ENCODE measurements at regions of chrX and their contacts with region 1.

Region 1: DNA sequence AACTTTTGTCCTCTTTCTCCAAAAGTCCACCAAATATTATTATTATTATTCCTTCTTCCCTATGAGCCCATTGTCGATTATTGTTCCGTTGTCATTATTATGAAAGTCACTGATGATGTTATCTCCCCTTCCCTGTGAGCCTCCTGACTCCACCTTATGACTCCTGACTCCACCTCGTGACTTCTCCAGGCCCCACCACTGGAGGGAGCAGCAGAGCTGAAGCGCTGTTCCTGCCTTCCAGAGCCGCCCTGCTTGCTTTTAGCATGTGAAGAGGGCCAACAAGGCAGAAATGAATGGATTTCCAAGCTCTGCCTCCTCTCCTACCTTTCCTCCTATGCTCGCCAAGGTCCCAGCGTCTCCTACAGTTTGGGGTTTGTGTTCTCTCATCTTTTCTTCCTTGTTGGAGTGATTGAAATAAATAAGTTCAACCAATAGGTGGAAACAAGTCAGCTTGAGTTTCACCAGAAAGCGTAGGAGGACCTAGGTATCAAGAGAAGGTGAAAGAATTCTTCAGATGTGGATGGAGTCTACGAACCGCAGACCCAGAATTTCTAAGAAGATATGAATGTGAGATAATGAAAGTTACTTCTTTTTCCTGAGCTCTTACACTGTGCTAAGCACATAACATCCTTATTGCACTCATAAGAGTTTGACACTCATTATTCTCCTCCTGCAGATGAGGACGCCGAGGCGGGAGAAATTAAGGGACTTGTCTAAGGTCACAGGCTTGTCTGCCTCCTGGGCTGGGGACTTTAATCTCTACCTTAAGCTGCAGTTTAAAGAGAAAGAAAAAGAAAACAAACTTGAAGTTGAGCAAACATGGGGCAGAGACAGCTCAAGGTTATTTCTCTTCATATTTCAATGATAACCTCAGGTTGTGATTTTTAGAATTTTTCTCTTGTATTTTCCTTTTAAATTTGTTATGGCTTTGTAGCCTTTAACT is 26.1 kb downstream of the IGSF1 start:
- DNase-seq: peak; percentile 58 to 72 (median 66)
- ATAC-seq: peak; percentile 99
- H3K4me3 ChIP-seq: no peak overlapping the region
- H3K27ac ChIP-seq: no peak overlapping the region
- H3K4me1 ChIP-seq: no peaks in the 10 kb centered on the region
- H3K27me3 ChIP-seq: no peaks in the 10 kb centered on the region
- CTCF ChIP-seq: peak; percentile 68 to 83 (median 82)
- EP300 ChIP-seq: no peak
- POLR2A ChIP-seq: no peak
- RAD21 ChIP-seq: peak; percentile 69 to 74

Region 2: DNA sequence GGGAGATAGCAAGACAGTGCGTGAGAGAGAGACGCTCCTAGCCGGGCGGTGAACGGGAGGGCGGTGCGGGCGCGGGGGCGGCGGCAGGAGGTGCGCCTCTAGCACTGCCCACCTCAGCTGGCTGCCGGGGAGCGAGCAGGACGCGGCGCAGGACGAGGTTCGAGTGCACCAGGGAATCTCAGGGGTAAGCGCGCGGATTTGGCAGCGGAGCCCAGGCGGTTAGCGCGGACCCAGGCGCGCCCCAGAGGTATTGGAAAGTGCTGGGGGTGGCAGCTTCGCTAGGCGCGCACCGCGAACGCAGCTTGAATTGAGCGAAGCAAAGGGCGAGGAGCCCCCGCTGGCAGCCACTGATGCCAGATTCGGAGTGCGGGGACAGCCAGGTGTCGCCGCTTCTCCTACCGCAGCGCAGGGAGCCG is 180.7 kb before region 1 on chrX:
- CTCF ChIA-PET with region 1: no interaction called
- POLR2A ChIA-PET with region 1: no interaction called
- in situ Hi-C with region 1: no loop called
- intact Hi-C with region 1: no loop called
- DNase-seq: no peak
- ATAC-seq: no peak
- H3K4me3 ChIP-seq: no peak overlapping the region
- H3K27ac ChIP-seq: no peak overlapping the region
- H3K4me1 ChIP-seq: peaks cover 0 to 10% of the 10 kb centered on the region in 2 experiments; a peak in 2 of 5 replicates
- H3K27me3 ChIP-seq: peaks cover 0 to 27% of the 10 kb centered on the region in 2 experiments; a peak in 3 of 5 replicates
- CTCF ChIP-seq: no peak
- EP300 ChIP-seq: no peak
- POLR2A ChIP-seq: no peak
- RAD21 ChIP-seq: no peak

Region 3: GRCh38 chrX:131331152-131331551 is 68.1 kb after region 1 on chrX:
- CTCF ChIA-PET with region 1: no interaction called
- POLR2A ChIA-PET with region 1: no interaction called
- in situ Hi-C with region 1: no loop called
- intact Hi-C with region 1: loop called (anchors 5 kb)
- DNase-seq: peak in 2 of 4 experiments; percentile 6 to 45
- ATAC-seq: peak; percentile 72
- H3K4me3 ChIP-seq: no peak overlapping the region
- H3K27ac ChIP-seq: no peak overlapping the region
- H3K4me1 ChIP-seq: no peaks in the 10 kb centered on the region; a peak in 1 of 5 replicates
- H3K27me3 ChIP-seq: no peaks in the 10 kb centered on the region
- CTCF ChIP-seq: peak; percentile 25 to 56 (median 35); a peak in 4 of 6 replicates
- EP300 ChIP-seq: no peak
- POLR2A ChIP-seq: no peak
- RAD21 ChIP-seq: peak; percentile 16 to 44; a peak in 2 of 4 replicates

Region 4: DNA sequence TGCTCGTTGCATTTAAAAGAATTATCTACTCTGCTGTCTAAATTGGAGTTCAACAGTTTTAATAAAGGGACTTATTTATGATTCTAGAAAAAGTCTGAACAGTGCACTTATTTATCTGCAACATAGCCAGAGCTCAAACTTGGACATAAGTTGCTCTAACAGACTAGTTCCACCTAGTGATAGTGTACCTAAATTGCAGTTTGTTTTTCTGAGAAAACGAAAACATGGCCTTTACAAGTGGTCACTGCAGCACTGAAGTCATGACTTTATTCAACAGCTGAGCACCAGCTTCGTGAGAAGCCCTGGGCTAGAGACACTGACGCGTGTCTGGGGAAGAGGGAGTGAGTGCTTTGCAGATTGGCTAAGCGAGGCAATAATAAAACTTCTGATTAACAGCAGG is 103.4 kb after region 1 on chrX:
- CTCF ChIA-PET with region 1: no interaction called
- POLR2A ChIA-PET with region 1: interaction called, 3 read pairs
- in situ Hi-C with region 1: no loop called
- intact Hi-C with region 1: loop called (anchors 10 kb)
- DNase-seq: peak in 2 of 4 experiments; percentile 8 to 9
- ATAC-seq: 0 out of 3 replicates have a peak, but pooled peaks have one; percentile 61
- H3K4me3 ChIP-seq: no peak overlapping the region
- H3K27ac ChIP-seq: no peak overlapping the region
- H3K4me1 ChIP-seq: no peaks in the 10 kb centered on the region
- H3K27me3 ChIP-seq: no peaks in the 10 kb centered on the region
- CTCF ChIP-seq: peak in 1 of 3 experiments; percentile 46; a peak in 3 of 6 replicates
- EP300 ChIP-seq: no peak
- POLR2A ChIP-seq: no peak
- RAD21 ChIP-seq: peak; percentile 48 to 67

Region 5: DNA sequence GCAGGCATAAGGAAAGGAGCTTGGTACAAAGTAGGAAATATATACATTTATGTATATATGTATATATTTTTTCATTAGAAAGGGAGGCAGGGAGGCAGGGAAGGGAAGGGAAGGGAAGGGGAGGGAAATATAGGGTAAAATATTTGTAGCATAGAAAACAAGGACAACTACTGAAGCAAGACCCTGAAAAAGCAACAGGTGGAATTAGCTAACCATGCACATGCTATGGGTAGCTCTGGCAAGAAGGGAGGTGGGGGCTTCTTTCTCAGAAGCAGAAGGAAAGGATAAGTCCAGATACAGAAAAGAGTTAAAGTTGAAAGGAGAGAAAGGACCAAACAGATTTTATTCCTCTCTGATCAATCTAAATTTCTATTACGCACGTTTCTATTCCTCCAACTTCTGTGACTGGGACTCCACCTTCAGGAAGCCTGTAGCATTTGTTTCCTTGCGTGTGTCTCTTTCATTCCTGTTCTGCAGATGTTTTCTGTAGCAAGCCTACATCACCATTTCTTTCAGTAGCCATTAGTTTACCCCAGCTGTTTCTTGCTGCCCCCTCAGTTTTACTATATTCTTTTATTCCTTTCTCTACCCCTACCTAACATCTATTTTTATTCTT is 363.8 kb after region 1 on chrX:
- CTCF ChIA-PET with region 1: no interaction called
- POLR2A ChIA-PET with region 1: interaction called, 3 read pairs
- in situ Hi-C with region 1: no loop called
- intact Hi-C with region 1: loop called (anchors 2 kb)
- DNase-seq: peak in 2 of 4 experiments; percentile 6 to 7
- ATAC-seq: no peak
- H3K4me3 ChIP-seq: no peak overlapping the region
- H3K27ac ChIP-seq: no peak overlapping the region
- H3K4me1 ChIP-seq: no peaks in the 10 kb centered on the region
- H3K27me3 ChIP-seq: no peaks in the 10 kb centered on the region; a peak in 1 of 5 replicates
- CTCF ChIP-seq: peak; percentile 33 to 61 (median 47); a peak in 4 of 6 replicates
- EP300 ChIP-seq: no peak
- POLR2A ChIP-seq: no peak
- RAD21 ChIP-seq: peak; percentile 55 to 69

Measured in K562 (cell line).